MCF 10A (cell line): ENCODE measurements at regions of chr1 and their contacts with region 1.

Region 1: GRCh38 chr1:201530741-201531531 is 8.0 kb upstream of the NAV1 start:
- DNase-seq: peak; percentile 91
- H3K4me3 Mint-ChIP-seq: no peak overlapping the region
- H3K27ac Mint-ChIP-seq: peak overlapping the region; percentile 46
- H3K4me1 Mint-ChIP-seq: peaks cover 9% of the 10 kb centered on the region
- H3K27me3 Mint-ChIP-seq: no peaks in the 10 kb centered on the region
- CTCF ChIP-seq: peak; percentile 99

Region 2: GRCh38 chr1:201275041-201275676 is 255.8 kb before region 1 on chr1:
- CTCF ChIA-PET with region 1: no interaction called
- POLR2A ChIA-PET with region 1: no interaction called
- intact Hi-C with region 1: no loop called
- DNase-seq: peak; percentile 100
- H3K4me3 Mint-ChIP-seq: no peak overlapping the region
- H3K27ac Mint-ChIP-seq: peak overlapping the region; percentile 79
- H3K4me1 Mint-ChIP-seq: peaks cover 52% of the 10 kb centered on the region
- H3K27me3 Mint-ChIP-seq: no peaks in the 10 kb centered on the region
- CTCF ChIP-seq: no peak

Region 3: GRCh38 chr1:201517948-201518470 is 12.9 kb before region 1 on chr1:
- CTCF ChIA-PET with region 1: interaction called, 136 read pairs
- POLR2A ChIA-PET with region 1: interaction called, 3 read pairs
- intact Hi-C with region 1: no loop called
- DNase-seq: no peak
- H3K4me3 Mint-ChIP-seq: no peak overlapping the region
- H3K27ac Mint-ChIP-seq: peak overlapping the region; percentile 2
- H3K4me1 Mint-ChIP-seq: peaks cover 7% of the 10 kb centered on the region
- H3K27me3 Mint-ChIP-seq: no peaks in the 10 kb centered on the region
- CTCF ChIP-seq: no peak

Region 4: GRCh38 chr1:201545851-201546492 is 15.0 kb after region 1 on chr1:
- CTCF ChIA-PET with region 1: interaction called, 38 read pairs
- POLR2A ChIA-PET with region 1: interaction called, 6 read pairs
- intact Hi-C with region 1: no loop called
- DNase-seq: no peak
- H3K4me3 Mint-ChIP-seq: no peak overlapping the region
- H3K27ac Mint-ChIP-seq: peak overlapping the region; percentile 39
- H3K4me1 Mint-ChIP-seq: no peaks in the 10 kb centered on the region
- H3K27me3 Mint-ChIP-seq: no peaks in the 10 kb centered on the region
- CTCF ChIP-seq: peak; percentile 5

Region 5: DNA sequence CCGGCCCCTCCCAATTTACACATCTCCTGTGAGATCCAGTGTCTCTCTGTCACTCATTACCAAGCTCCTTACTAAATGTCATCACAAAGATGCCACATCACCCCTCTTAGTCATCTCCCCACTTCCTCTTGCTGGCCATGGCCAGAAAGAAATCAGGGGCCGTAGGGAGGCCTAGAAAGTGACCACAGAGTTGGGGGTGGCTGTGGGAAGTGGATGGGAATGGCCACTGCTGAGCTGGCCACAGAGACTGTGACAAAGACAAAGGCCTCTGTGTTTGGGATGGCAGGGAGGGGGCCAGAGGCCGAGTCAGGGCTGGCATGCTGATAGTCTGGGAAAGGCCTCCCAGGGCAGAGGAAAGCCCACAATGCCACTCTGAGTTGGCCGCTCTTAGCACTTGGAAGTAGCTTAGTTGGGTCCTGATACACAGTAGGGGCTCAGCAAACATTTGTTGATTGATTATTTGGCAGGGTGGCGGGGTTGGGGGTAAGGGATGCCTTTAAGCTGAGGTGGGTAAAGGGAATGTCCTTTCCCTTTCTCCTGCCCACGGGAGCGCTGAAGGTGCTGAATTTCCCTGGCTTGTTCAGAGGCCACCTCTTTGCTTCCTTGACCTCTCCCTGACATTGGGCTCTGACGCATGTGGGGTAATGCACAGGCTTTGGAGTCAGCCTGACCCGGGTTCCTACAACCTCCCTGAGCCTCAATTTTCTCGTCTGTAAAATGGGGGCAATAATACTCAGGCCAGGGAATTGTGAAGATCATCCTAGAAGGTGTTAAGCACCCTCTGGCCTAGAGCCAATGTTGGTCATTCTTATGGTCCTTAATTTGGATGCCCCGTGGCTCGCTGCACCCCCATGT is 21.2 kb after region 1 on chr1:
- CTCF ChIA-PET with region 1: interaction called, 120 read pairs
- POLR2A ChIA-PET with region 1: interaction called, 3 read pairs
- intact Hi-C with region 1: no loop called
- DNase-seq: no peak
- H3K4me3 Mint-ChIP-seq: no peak overlapping the region
- H3K27ac Mint-ChIP-seq: no peak overlapping the region
- H3K4me1 Mint-ChIP-seq: no peaks in the 10 kb centered on the region
- H3K27me3 Mint-ChIP-seq: no peaks in the 10 kb centered on the region
- CTCF ChIP-seq: no peak

Region 6: DNA sequence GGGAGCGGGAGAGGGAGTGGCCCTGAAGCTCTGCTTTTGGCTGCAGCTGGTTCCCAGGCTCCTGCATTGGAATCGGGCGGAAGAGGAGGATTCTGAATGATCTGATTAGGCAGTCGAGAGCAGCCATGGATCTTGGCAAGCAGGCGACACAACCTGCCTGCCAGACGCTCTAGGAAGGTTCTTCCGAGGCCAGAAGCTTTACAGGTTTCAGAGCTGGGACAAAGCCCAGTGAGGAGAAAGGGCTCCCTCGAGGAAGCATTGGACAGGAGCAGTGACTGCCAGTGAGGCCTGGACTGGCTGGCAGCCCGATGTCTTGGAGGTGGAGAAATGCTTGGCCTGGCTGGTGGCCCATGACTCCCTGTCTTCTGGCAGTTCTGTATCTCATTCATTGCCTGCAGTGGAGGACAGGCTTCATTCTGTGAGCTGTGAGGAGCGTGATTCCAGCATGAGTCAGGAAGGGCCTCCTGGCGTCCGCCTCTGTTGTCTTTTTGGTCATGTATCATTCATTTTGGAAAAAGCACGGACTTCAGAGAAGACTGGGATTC is 165.4 kb after region 1 on chr1:
- CTCF ChIA-PET with region 1: interaction called, 12 read pairs
- POLR2A ChIA-PET with region 1: interaction called, 4 read pairs
- intact Hi-C with region 1: loop called (anchors 2 kb)
- DNase-seq: peak; percentile 100
- H3K4me3 Mint-ChIP-seq: peak overlapping the region; percentile 28
- H3K27ac Mint-ChIP-seq: peak overlapping the region; percentile 44
- H3K4me1 Mint-ChIP-seq: peaks cover 32% of the 10 kb centered on the region
- H3K27me3 Mint-ChIP-seq: no peaks in the 10 kb centered on the region
- CTCF ChIP-seq: peak; percentile 6

Region 7: DNA sequence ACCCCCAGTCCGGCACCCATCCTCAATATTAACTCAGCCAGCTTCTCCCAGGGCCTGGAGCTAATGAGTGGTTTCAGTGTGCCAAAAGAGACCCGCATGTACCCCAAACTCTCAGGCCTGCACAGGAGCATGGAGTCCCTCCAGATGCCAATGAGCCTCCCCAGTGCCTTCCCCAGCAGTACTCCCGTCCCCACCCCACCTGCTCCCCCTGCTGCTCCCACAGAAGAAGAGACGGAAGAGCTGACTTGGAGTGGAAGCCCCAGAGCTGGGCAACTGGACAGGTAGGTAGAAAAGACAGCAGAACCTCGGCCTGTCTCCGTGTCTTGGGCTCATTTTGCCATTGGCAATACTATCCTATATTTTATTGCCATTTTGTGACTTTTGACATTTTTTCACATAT is 252.6 kb after region 1 on chr1:
- CTCF ChIA-PET with region 1: interaction called, 13 read pairs
- POLR2A ChIA-PET with region 1: interaction called, 4 read pairs
- intact Hi-C with region 1: no loop called
- DNase-seq: no peak
- H3K4me3 Mint-ChIP-seq: no peak overlapping the region
- H3K27ac Mint-ChIP-seq: peak overlapping the region; percentile 22
- H3K4me1 Mint-ChIP-seq: peaks cover 12% of the 10 kb centered on the region
- H3K27me3 Mint-ChIP-seq: no peaks in the 10 kb centered on the region
- CTCF ChIP-seq: no peak